Caco-2 (cell line): ENCODE measurements at regions of chr9 and their contacts with region 1.

Region 1: GRCh38 chr9:33473643-33474352 is at the start of gene NOL6:
- DNase-seq: peak; percentile 98 to 99
- H3K4me3 ChIP-seq: peak within 1 kb of the TSS; percentile 100
- H3K4me3 Mint-ChIP-seq: peak within 1 kb of the TSS; percentile 91
- H3K27ac Mint-ChIP-seq: peak within 1 kb of the TSS; percentile 88
- H3K4me1 ChIP-seq: peaks cover 8% of the 10 kb centered on the region; the same call in 1 of the 2 replicates
- H3K4me1 Mint-ChIP-seq: peaks cover 10% of the 10 kb centered on the region
- H3K27me3 ChIP-seq: no peaks in the 10 kb centered on the region
- H3K27me3 Mint-ChIP-seq: no peaks in the 10 kb centered on the region
- CTCF ChIP-seq: no peak
- total RNA-seq, gene NOL6: 47.2 and 52.1 TPM in 2 replicates

Region 2: GRCh38 chr9:33170464-33171415 is 303.1 kb before region 1 on chr9:
- CTCF ChIA-PET with region 1: no interaction called
- POLR2A ChIA-PET with region 1: no interaction called
- intact Hi-C with region 1: no loop called
- DNase-seq: peak in 1 of 2 experiments; percentile 36
- H3K4me3 ChIP-seq: no peak overlapping the region
- H3K4me3 Mint-ChIP-seq: no peak overlapping the region
- H3K27ac Mint-ChIP-seq: peak overlapping the region; percentile 95
- H3K4me1 ChIP-seq: peaks cover 45% of the 10 kb centered on the region
- H3K4me1 Mint-ChIP-seq: peaks cover 49% of the 10 kb centered on the region
- H3K27me3 ChIP-seq: no peaks in the 10 kb centered on the region
- H3K27me3 Mint-ChIP-seq: no peaks in the 10 kb centered on the region
- CTCF ChIP-seq: peak in 1 of 2 experiments; percentile 37

Region 3: DNA sequence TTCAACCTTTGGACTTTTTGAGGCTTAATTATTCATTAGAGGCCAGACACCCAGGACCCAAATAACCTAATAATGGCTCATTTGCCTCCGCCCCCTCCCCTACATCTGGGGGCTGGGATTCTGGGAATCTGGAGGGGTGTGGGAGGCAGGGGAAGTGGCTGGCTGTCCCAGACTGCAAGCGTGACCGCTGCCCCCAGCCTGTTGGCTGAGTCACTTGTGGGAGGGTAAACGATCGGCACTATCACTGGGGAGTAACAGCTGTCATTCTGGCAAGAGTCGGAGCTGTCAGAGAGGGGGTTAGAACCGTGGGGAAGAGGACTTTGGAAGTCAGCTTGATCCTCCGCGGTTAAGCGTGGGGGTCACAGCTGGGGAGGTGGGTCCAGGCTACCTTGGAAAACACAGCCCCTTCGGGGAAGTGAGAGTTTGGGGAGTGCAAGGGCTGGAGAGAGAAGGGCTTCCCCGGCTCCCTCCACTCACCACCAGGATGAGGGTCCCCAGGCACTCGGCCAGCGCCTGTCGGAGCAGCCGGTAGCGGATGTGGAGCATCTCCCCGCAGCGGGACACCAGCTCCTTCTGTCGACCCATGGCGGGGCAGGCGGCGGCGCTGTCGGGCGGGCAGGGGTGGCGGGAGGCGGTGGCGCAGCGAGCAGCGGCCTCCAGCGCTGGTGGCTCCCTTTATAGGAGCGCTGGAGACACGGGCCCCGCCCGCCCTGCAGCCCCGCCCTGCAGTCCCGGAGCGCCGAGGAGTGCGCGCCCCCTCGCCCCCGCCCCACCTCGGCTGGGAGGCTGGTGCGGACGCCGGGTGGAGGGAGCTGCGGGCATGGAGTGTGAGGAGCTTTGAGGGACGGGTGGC is 26.6 kb before region 1 on chr9 and contains the start of gene AQP3:
- CTCF ChIA-PET with region 1: interaction called, 13 read pairs
- POLR2A ChIA-PET with region 1: interaction called, 12 read pairs
- intact Hi-C with region 1: no loop called
- DNase-seq: peak; percentile 82 to 85
- H3K4me3 ChIP-seq: peak within 1 kb of the TSS; percentile 62
- H3K4me3 Mint-ChIP-seq: peak within 1 kb of the TSS; percentile 77
- H3K27ac Mint-ChIP-seq: peak within 1 kb of the TSS; percentile 62
- H3K4me1 ChIP-seq: peaks cover 49% of the 10 kb centered on the region
- H3K4me1 Mint-ChIP-seq: peaks cover 30% of the 10 kb centered on the region
- H3K27me3 ChIP-seq: no peaks in the 10 kb centered on the region
- H3K27me3 Mint-ChIP-seq: no peaks in the 10 kb centered on the region
- CTCF ChIP-seq: peak; percentile 33
- total RNA-seq, gene AQP3: 24.1 and 24.8 TPM in 2 replicates

Region 4: GRCh38 chr9:33452828-33453271 is 20.9 kb before region 1 on chr9:
- CTCF ChIA-PET with region 1: interaction called, 15 read pairs
- POLR2A ChIA-PET with region 1: interaction called, 12 read pairs
- intact Hi-C with region 1: no loop called
- DNase-seq: peak; percentile 71 to 73
- H3K4me3 ChIP-seq: no peak overlapping the region
- H3K4me3 Mint-ChIP-seq: no peak overlapping the region
- H3K27ac Mint-ChIP-seq: no peak overlapping the region
- H3K4me1 ChIP-seq: peaks cover 24% of the 10 kb centered on the region
- H3K4me1 Mint-ChIP-seq: peaks cover 8% of the 10 kb centered on the region
- H3K27me3 ChIP-seq: no peaks in the 10 kb centered on the region
- H3K27me3 Mint-ChIP-seq: no peaks in the 10 kb centered on the region
- CTCF ChIP-seq: peak; percentile 62 to 70

Region 5: GRCh38 chr9:33517373-33517772 is 43.6 kb after region 1 on chr9:
- CTCF ChIA-PET with region 1: interaction called, 11 read pairs
- POLR2A ChIA-PET with region 1: no interaction called
- intact Hi-C with region 1: loop called (anchors 5 kb)
- DNase-seq: peak in 1 of 2 experiments; percentile 60
- H3K4me3 ChIP-seq: no peak overlapping the region
- H3K4me3 Mint-ChIP-seq: no peak overlapping the region
- H3K27ac Mint-ChIP-seq: no peak overlapping the region
- H3K4me1 ChIP-seq: peaks cover 28% of the 10 kb centered on the region
- H3K4me1 Mint-ChIP-seq: peaks cover 23% of the 10 kb centered on the region
- H3K27me3 ChIP-seq: no peaks in the 10 kb centered on the region
- H3K27me3 Mint-ChIP-seq: peaks cover under 1% of the 10 kb centered on the region
- CTCF ChIP-seq: peak; percentile 59 to 71